SK-MEL-5 (cell line): ENCODE measurements at regions of chr6 and their contacts with region 1.

Region 1: DNA sequence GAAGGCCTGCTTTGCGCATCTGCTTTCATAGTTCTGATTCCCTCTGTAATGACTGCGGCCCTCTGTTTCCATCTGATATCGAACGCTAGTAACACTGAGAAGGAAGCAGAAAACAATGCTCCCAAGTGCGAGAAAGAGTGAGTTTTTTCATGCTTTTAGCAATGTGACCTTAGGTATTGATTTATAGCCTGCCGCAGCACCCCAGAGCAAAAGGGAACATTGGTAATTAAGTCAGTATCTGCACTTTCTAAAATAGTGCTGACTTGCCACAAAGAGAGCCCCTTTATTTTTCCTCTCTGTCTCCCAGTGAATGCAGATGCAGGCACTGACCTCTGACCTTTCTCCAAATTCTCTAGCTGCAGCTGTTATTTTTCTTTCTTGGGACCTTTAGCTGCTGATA is 129.8 kb downstream of the HDGFL1 start:
- DNase-seq: no peak

Region 2: DNA sequence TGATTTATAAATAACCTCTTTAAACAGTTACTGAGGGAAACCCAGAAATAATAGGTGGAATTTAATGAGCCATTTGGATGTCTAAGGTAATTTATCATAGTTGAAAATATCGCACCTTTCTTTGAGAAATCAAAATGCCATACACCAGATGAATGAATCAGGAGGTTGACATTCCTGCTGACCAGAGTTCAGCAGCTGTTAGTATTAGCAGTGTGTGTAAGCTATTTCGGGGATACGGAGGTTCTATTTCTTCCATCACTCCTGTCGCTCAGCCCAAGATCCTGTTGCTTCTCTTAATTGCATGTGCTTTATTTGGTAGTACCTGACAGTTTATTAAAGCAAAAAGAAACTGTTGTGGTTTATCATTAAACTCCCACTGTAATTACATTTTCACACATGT is 62.7 kb before region 1 on chr6:
- in situ Hi-C with region 1: no loop called
- DNase-seq: no peak

Region 3: DNA sequence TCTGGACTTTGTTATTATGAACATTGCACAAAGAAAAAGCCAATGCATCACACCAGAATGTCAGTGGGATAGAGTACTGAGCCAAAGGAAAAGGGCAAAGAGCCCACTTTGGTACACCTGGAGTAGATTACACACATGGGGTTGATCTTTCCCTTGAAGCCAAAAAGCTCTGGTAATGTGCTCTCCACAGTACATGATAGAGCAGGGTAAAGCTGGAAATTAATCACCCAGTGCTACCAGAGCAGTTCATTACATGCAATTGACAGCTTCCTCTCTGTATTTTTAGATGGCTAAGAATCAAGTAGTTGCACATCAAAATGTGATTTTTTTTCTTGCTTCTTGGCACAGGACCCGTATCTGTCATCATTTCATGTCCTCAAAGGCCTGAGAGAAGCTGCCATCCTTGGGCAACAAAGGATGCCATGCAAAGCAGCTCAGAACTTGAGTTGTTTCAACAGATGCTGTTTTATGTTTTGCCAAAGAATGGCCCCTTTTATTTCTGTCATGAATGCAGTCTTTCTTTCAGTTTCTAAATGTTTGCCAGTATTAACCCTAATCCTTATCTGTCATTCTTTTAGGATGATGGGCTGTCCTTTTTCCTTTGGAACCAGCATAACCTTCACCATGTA is 41.7 kb before region 1 on chr6:
- in situ Hi-C with region 1: loop called (anchors 5 kb)
- DNase-seq: peak; percentile 100

Region 4: GRCh38 chr6:22789315-22789714 is 90.2 kb after region 1 on chr6:
- in situ Hi-C with region 1: no loop called
- DNase-seq: no peak